Sigmoid colon (tissue), 7 donors: ENCODE measurements at regions of chr1 and their contacts with region 1.

Region 1: GRCh38 chr1:67134695-67135094 is at the start of gene C1orf141:
- DNase-seq: no peak
- H3K4me3 ChIP-seq: peak within 1 kb of the TSS in 3 of 4 donors; percentile 26 to 40 (median 31)
- H3K27ac ChIP-seq: no peak within 1 kb of the TSS
- H3K4me1 ChIP-seq: peaks cover 0 to 11% (median 11%) of the 10 kb centered on the region in 4 donors
- H3K27me3 ChIP-seq: no peaks in the 10 kb centered on the region
- CTCF ChIP-seq: no peak
- EP300 ChIP-seq: no peak
- POLR2A ChIP-seq: no peak
- total RNA-seq, gene C1orf141: not detected

Region 2: GRCh38 chr1:67005068-67005467 is 129.6 kb before region 1 on chr1:
- intact Hi-C with region 1: loop called (anchors 5 kb)
- DNase-seq: no peak
- H3K4me3 ChIP-seq: no peak overlapping the region
- H3K27ac ChIP-seq: peak overlapping the region in 1 of 4 donors; percentile 6
- H3K4me1 ChIP-seq: peaks cover 0 to 32% (median 16%) of the 10 kb centered on the region in 4 donors
- H3K27me3 ChIP-seq: no peaks in the 10 kb centered on the region
- CTCF ChIP-seq: no peak
- EP300 ChIP-seq: no peak
- POLR2A ChIP-seq: no peak

Region 3: DNA sequence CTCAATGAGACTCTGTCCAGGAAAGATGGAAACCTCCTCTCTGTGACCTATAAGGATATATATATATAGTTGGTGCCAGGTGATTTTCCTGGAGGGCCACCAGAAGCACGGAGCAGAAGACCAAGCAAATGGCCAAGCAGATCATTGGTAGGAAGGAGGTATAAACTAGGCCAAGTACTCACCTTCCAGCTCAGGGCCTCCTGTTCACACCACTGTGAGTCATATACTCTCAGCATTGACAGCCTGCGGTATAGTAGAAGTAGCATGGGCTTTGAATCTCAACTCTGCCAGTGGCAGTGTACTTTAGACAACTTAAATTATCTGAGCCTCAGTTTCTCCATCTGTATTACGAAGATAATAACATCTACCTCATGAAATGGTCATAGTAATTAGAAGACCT is 188.4 kb after region 1 on chr1:
- intact Hi-C with region 1: no loop called
- DNase-seq: no peak
- H3K4me3 ChIP-seq: no peak overlapping the region
- H3K27ac ChIP-seq: no peak overlapping the region
- H3K4me1 ChIP-seq: peaks cover 0 to 3% (median 0%) of the 10 kb centered on the region in 4 donors
- H3K27me3 ChIP-seq: no peaks in the 10 kb centered on the region
- CTCF ChIP-seq: no peak
- EP300 ChIP-seq: no peak
- POLR2A ChIP-seq: no peak